ENCODE measurements at regions of chr13 and their contacts with region 1.

Region 1: DNA sequence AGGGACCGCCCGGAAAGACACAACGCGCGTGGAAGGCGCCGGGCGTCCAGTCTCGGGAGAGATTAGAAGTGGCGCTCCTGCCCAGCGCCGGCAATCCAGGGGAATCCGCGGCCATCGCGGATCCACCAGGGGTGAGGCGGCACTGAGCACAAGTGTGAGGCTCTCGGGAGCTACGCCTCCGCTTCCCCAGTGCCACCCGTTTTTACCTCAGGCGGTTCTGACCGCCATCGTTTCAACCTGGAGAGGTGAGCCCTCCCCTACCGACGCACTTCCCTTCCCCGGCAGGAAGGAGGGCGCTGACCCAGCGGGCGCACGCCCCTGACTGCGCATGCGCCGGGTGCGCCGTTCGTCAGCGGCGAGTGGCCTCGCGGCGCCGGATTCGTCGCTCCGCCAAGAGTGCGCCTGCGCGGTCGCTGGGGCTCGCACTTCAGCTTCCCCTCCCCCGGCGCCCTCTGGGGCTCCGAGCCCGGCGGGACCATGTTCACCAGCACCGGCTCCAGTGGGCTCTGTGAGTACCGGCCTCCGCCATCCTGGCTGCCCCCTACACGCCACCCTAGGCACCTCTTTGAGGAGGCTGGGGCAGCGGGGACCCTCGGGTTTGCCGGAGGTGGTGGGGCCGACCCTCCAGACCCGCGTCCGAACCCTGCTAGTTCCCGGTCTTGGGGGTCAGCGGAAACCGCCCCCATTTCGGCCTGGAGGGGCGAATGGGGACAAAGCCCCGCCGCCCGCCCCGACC is at the start of gene UBAC2:
- DNase-seq: peak; percentile 96
- ATAC-seq: peak; percentile 81
- H3K4me3 Mint-ChIP-seq: peak within 1 kb of the TSS; percentile 97
- H3K27ac Mint-ChIP-seq: peak within 1 kb of the TSS; percentile 97
- H3K4me1 Mint-ChIP-seq: peaks cover 64% of the 10 kb centered on the region
- H3K27me3 Mint-ChIP-seq: no peaks in the 10 kb centered on the region
- total RNA-seq, gene UBAC2: 67.4 to 71.2 TPM

Region 2: GRCh38 chr13:99103536-99103935 is 97.1 kb before region 1 on chr13:
- CTCF ChIA-PET with region 1: no interaction called
- POLR2A ChIA-PET with region 1: no interaction called
- DNase-seq: no peak
- ATAC-seq: no peak
- H3K4me3 Mint-ChIP-seq: no peak overlapping the region
- H3K27ac Mint-ChIP-seq: no peak overlapping the region
- H3K4me1 Mint-ChIP-seq: peaks cover 3% of the 10 kb centered on the region
- H3K27me3 Mint-ChIP-seq: peaks cover 8% of the 10 kb centered on the region

Region 3: GRCh38 chr13:99214232-99214631 is 13.6 kb after region 1 on chr13:
- CTCF ChIA-PET with region 1: interaction called, 48 read pairs
- POLR2A ChIA-PET with region 1: interaction called, 66 read pairs
- DNase-seq: peak; percentile 52
- ATAC-seq: peak; percentile 20
- H3K4me3 Mint-ChIP-seq: peak overlapping the region; percentile 76
- H3K27ac Mint-ChIP-seq: peak overlapping the region; percentile 93
- H3K4me1 Mint-ChIP-seq: peaks cover 73% of the 10 kb centered on the region
- H3K27me3 Mint-ChIP-seq: no peaks in the 10 kb centered on the region

Region 4: DNA sequence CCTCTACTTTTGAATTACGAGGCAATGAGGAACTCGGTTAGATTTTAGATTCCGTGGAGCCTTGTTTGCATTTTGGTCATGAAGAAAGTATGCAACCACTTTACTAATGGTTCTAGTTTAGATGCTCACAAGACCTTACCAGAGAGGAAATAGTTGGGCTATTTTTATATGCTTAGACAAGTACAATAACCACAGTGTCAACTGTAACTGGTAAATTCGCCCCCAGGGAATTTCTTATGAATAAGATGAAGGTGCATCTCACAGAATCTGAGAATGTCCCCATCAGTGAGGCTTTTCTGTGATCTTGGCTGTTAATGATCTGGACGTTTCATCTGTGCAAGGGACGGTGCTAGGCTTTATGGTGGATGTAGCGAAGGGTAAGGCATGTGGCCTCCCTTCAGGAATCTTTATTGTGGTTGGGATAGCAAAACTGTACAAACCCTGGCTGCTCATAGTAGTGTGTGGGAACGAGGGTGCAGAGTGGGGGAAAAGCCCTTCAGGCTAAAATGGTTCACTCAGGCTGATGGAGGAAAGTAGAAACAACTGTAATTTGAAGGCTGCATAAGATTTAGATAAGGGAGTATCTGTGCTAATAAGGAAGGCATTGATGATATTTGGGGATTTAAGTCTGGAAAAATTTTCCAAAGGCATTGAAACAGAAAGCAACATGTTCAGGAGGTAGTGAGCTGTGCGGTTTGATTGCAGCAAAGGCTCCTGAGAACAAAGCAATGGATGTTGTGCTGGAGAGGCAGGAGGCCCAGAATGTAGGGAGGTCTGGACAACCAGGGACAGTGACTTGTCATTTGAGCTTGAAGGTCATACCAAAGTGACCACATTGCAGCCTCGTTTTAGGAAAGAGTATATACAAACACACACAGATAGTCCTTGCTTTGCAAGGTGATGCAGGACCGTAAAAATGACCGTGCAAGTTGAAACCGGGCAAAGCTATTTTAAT is 28.4 kb after region 1 on chr13:
- CTCF ChIA-PET with region 1: interaction called, 9 read pairs
- POLR2A ChIA-PET with region 1: interaction called, 31 read pairs
- DNase-seq: no peak
- ATAC-seq: peak; percentile 62
- H3K4me3 Mint-ChIP-seq: peak overlapping the region; percentile 65
- H3K27ac Mint-ChIP-seq: peak overlapping the region; percentile 84
- H3K4me1 Mint-ChIP-seq: peaks cover 62% of the 10 kb centered on the region
- H3K27me3 Mint-ChIP-seq: no peaks in the 10 kb centered on the region

Region 5: GRCh38 chr13:99258210-99258860 is 57.7 kb after region 1 on chr13 and contains the start of gene GPR18:
- CTCF ChIA-PET with region 1: interaction called, 219 read pairs
- POLR2A ChIA-PET with region 1: interaction called, 84 read pairs
- DNase-seq: peak; percentile 65
- ATAC-seq: peak; percentile 76
- H3K4me3 Mint-ChIP-seq: peak within 1 kb of the TSS; percentile 83
- H3K27ac Mint-ChIP-seq: peak within 1 kb of the TSS; percentile 94
- H3K4me1 Mint-ChIP-seq: peaks cover 65% of the 10 kb centered on the region
- H3K27me3 Mint-ChIP-seq: no peaks in the 10 kb centered on the region
- total RNA-seq, gene GPR18: 16.2 to 16.6 TPM

Measured in activated CD8-positive, alpha-beta T cell treated with anti-CD3 and anti-CD28 coated beads, Interleukin-2, amount 10 ng/mL, durations not matched to agents 7 days and 5 days (primary cell).